ENCODE measurements at regions of chr14 and their contacts with region 1.

Region 1: DNA sequence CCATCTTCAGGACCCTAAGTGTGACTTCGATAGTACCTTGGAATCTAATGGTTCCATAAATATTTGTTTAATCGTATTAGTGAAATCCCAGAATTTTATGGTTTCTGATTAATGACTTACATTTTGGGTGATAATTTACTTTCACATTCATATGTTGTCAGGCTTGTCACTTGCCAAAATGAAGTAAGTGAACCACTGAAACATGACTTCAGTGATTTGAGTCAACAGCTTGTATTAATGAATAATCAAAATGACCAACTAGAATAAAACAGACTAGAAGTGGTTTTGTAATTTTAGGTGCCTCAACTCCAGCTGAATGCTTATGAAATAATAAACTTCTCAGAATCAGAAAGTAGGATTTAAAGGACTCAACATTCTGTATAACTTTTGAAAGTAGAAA is 517.1 kb downstream of the PRKD1 start:
- DNase-seq: no peak
- H3K4me3 ChIP-seq: no peak overlapping the region
- H3K27ac ChIP-seq: no peak overlapping the region
- H3K4me1 ChIP-seq: no peaks in the 10 kb centered on the region
- H3K27me3 ChIP-seq: no peaks in the 10 kb centered on the region
- CTCF ChIP-seq: no peak
- POLR2A ChIP-seq: no peak

Region 2: DNA sequence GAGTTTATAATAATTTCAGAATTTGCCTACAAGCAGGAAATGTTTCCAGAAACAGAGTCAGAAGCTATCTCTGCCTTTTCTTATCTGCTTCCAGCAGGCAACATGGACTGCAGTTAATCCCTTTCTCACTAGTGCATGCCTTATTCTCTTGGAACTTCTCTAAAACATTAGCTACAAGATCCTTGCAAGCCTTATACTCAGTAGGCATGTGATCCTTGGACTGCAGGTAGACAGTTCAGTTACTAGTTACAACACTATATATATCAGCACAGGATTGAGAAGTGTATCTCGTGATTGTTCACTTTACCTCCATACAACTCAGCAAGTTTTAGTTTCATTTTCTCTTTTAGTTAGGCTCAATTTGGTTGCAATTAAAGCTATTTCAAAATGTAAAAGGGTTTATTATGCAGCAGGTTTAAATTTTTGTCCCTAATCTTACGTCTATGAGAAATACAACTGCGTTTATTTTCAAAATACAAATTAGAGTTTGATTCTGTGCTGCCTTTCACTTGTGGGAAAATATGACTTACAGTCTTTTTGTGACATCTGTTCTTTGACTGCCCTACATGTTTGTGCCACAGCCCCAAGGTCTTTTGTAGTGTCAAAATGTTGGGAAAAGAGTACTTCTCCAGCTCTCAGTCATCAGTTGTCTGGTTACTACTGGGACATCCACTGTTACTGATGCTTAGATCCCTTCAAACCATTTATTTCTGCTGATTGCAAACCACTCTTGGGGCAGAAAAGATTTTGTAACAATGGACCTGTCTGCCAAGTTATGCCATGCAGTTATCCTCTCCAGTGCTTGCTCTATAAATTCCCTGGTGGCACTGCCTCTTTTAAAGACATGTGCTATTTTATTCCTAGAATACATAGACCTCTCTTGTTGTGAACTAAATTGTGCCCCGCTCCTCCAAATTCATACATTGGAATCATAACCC is 1353.0 kb before region 1 on chr14:
- intact Hi-C with region 1: no loop called
- DNase-seq: no peak
- H3K4me3 ChIP-seq: peak overlapping the region; percentile 6 to 59 (median 39)
- H3K27ac ChIP-seq: no peak overlapping the region
- H3K4me1 ChIP-seq: no peaks in the 10 kb centered on the region
- H3K27me3 ChIP-seq: no peaks in the 10 kb centered on the region
- CTCF ChIP-seq: no peak
- POLR2A ChIP-seq: no peak

Region 3: DNA sequence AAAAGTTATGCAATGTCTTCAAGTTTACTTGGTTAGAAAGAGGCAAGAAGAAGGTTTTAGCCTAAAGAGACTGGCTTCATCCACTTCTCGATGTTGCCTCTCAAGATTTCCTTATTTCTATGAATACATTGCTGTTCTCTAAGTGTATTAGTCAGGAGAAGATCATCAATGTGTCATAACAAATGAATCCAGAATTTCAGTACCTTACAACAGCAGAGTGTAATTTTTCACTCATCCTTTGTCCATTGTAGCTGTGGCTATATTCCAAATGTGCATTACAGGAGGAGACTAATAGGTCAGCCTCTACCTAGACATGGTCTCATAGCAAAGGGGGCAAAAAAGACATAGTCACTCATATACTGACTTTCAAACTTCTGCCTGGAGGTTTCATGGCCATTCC is 62.1 kb before region 1 on chr14:
- intact Hi-C with region 1: no loop called
- DNase-seq: no peak
- H3K4me3 ChIP-seq: no peak overlapping the region
- H3K27ac ChIP-seq: no peak overlapping the region
- H3K4me1 ChIP-seq: no peaks in the 10 kb centered on the region
- H3K27me3 ChIP-seq: no peaks in the 10 kb centered on the region
- CTCF ChIP-seq: no peak
- POLR2A ChIP-seq: no peak

Region 4: GRCh38 chr14:29370024-29370423 is 40.6 kb before region 1 on chr14:
- intact Hi-C with region 1: loop called (anchors 2 kb)
- DNase-seq: no peak
- H3K4me3 ChIP-seq: no peak overlapping the region
- H3K27ac ChIP-seq: no peak overlapping the region
- H3K4me1 ChIP-seq: no peaks in the 10 kb centered on the region
- H3K27me3 ChIP-seq: no peaks in the 10 kb centered on the region
- CTCF ChIP-seq: no peak
- POLR2A ChIP-seq: no peak

Region 5: GRCh38 chr14:30431552-30431951 is 1021.0 kb after region 1 on chr14:
- intact Hi-C with region 1: loop called (anchors 10 kb)
- DNase-seq: no peak
- H3K4me3 ChIP-seq: no peak overlapping the region
- H3K27ac ChIP-seq: no peak overlapping the region
- H3K4me1 ChIP-seq: no peaks in the 10 kb centered on the region
- H3K27me3 ChIP-seq: no peaks in the 10 kb centered on the region
- CTCF ChIP-seq: no peak
- POLR2A ChIP-seq: no peak

Measured in breast epithelium (tissue), 4 donors.